ENCODE measurements at regions of chr9 and their contacts with region 1.

Region 1: GRCh38 chr9:129897263-129897662 is 62.0 kb downstream of the USP20 start:
- DNase-seq: no peak
- H3K4me3 ChIP-seq: no peak overlapping the region
- H3K27me3 ChIP-seq: no peaks in the 10 kb centered on the region
- CTCF ChIP-seq: no peak

Region 2: GRCh38 chr9:129838707-129839259 is 58.5 kb before region 1 on chr9:
- CTCF ChIA-PET with region 1: no interaction called
- POLR2A ChIA-PET with region 1: no interaction called
- DNase-seq: peak; percentile 73
- H3K4me3 ChIP-seq: no peak overlapping the region
- H3K27me3 ChIP-seq: no peaks in the 10 kb centered on the region
- CTCF ChIP-seq: no peak

Region 3: DNA sequence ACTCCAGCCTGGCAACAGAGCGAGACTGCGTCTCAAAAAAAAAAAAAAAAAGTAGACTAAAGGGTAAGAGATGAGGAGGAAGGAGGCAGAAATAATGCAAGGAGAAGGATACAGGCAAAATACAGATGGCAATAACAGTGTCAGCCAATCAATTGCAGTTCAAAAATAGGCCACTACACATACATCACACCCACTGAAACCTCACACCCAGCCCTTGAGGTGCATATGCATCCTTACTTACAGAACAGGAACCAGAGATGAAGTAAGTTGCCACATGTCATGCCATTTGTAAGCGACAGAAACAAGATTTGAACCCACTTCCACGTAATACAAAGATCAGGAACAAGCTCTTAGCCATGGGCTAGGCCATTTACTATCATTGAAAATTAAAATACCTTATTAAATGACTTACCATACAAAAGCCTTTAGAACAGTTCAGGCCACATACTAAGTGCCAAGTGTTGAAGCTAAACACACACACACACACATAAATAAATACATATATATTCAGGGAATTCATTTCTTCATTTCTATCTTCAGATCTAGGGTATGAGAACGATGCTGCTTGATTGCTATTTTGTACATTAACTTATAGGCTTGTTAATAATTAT is 47.3 kb after region 1 on chr9:
- CTCF ChIA-PET with region 1: no interaction called
- POLR2A ChIA-PET with region 1: interaction called, 27 read pairs
- DNase-seq: no peak
- H3K4me3 ChIP-seq: no peak overlapping the region
- H3K27me3 ChIP-seq: no peaks in the 10 kb centered on the region
- CTCF ChIP-seq: no peak

Region 4: DNA sequence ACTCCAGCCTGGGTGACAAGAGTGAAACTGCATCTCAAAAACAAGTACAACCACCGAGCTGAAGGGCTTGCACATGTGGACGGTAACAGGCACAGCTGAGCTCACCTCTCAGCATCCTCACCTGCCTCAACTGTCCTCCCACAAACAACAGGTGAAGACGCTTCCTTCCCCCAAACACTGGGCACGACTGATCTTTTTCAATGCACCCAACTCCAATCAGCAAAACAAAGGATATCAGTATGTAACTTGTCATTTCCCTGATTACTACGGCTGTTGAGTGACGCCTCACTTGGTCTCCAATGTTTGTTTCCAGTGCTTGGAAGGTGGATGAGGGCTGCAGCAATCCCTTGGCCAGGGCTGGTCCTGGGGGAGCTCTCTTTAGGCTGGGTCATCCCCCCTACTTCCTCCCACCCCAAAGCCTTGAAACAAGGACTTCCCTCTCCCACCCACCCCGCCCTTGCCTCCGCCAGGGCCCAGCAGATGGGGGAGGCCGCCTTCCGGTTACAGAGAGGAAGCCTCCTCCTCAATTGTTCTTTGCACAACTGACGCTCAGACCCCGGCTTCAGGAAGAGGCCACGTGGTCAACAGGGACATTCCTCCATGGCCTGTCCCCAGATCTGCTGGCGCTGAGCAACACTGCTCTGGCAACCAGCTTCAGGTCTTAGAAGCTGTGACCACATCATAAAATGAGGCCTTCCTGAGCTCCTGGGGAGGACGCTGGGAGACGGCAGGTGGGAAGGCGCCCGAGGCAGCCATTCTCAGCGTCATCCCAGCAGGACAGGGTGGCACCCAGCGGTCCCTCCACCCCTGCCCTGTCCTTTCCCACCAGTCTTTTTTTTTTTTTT is 1373.1 kb after region 1 on chr9:
- CTCF ChIA-PET with region 1: no interaction called
- POLR2A ChIA-PET with region 1: no interaction called
- DNase-seq: no peak
- H3K4me3 ChIP-seq: no peak overlapping the region
- H3K27me3 ChIP-seq: 0 out of 2 replicates have a peak, but pooled peaks cover 1% of the 10 kb centered on the region
- CTCF ChIP-seq: no peak

Measured in BJ (cell line).